ENCODE measurements at regions of chr14 and their contacts with region 1.

Region 1: GRCh38 chr14:88667555-88668273 is 104.9 kb downstream of the ZC3H14 start:
- DNase-seq: peak; percentile 49
- H3K4me3 ChIP-seq: no peak overlapping the region
- H3K27ac ChIP-seq: no peak overlapping the region
- H3K4me1 ChIP-seq: peaks cover 0 to 5% (median 2%) of the 10 kb centered on the region in 4 donors
- H3K27me3 ChIP-seq: no peaks in the 10 kb centered on the region
- CTCF ChIP-seq: peak; percentile 65 to 84 (median 79)
- EP300 ChIP-seq: no peak
- POLR2A ChIP-seq: no peak

Region 2: GRCh38 chr14:88411039-88411438 is 256.7 kb before region 1 on chr14:
- in situ Hi-C with region 1: no loop called
- intact Hi-C with region 1: no loop called
- DNase-seq: no peak
- H3K4me3 ChIP-seq: no peak overlapping the region
- H3K27ac ChIP-seq: no peak overlapping the region
- H3K4me1 ChIP-seq: no peaks in the 10 kb centered on the region
- H3K27me3 ChIP-seq: no peaks in the 10 kb centered on the region
- CTCF ChIP-seq: no peak
- EP300 ChIP-seq: no peak
- POLR2A ChIP-seq: no peak

Region 3: GRCh38 chr14:88863167-88863684 is 195.5 kb after region 1 on chr14:
- in situ Hi-C with region 1: loop called (anchors 25 kb)
- intact Hi-C with region 1: loop called (anchors 5 kb)
- DNase-seq: no peak
- H3K4me3 ChIP-seq: no peak overlapping the region
- H3K27ac ChIP-seq: no peak overlapping the region
- H3K4me1 ChIP-seq: no peaks in the 10 kb centered on the region
- H3K27me3 ChIP-seq: no peaks in the 10 kb centered on the region
- CTCF ChIP-seq: no peak
- EP300 ChIP-seq: no peak
- POLR2A ChIP-seq: no peak

Region 4: DNA sequence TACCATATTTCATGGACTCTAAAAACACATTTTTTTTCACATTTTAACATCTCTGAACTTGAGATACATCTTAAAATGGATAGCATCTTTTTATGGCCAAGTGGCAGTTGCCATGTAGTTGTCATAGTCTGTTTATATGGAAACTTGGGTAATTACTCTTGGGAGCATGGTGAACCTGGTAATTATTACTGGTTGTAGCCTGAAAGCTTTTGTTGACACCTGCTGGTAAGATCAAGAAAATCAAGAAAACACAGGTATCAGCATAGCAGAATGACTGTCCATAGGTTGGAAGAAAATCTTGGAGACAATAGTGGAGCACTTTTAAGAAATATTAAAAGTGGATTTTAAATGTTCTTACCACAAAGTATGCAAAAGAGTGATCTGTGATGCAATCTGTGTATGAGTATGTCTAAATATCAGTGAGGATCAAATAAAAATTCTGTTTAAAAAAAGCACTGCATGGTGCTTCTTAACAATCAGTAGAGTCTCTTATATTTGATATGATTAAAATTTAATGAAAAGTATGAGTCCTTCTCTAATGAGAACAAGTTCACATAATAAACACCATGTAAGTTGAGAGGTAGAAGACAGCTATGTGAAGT is 200.9 kb after region 1 on chr14:
- in situ Hi-C with region 1: loop called (anchors 25 kb)
- intact Hi-C with region 1: loop called (anchors 5 kb)
- DNase-seq: no peak
- H3K4me3 ChIP-seq: no peak overlapping the region
- H3K27ac ChIP-seq: no peak overlapping the region
- H3K4me1 ChIP-seq: no peaks in the 10 kb centered on the region
- H3K27me3 ChIP-seq: no peaks in the 10 kb centered on the region
- CTCF ChIP-seq: peak; percentile 26 to 41 (median 36)
- EP300 ChIP-seq: no peak
- POLR2A ChIP-seq: no peak

Region 5: GRCh38 chr14:89000007-89000942 is 332.6 kb after region 1 on chr14:
- in situ Hi-C with region 1: loop called in 1 of 4 experiments (anchors 25 kb)
- intact Hi-C with region 1: no loop called
- DNase-seq: peak; percentile 68
- H3K4me3 ChIP-seq: no peak overlapping the region
- H3K27ac ChIP-seq: no peak overlapping the region
- H3K4me1 ChIP-seq: peaks cover 0 to 4% (median 0%) of the 10 kb centered on the region in 4 donors
- H3K27me3 ChIP-seq: no peaks in the 10 kb centered on the region
- CTCF ChIP-seq: no peak
- EP300 ChIP-seq: no peak
- POLR2A ChIP-seq: no peak

Region 6: DNA sequence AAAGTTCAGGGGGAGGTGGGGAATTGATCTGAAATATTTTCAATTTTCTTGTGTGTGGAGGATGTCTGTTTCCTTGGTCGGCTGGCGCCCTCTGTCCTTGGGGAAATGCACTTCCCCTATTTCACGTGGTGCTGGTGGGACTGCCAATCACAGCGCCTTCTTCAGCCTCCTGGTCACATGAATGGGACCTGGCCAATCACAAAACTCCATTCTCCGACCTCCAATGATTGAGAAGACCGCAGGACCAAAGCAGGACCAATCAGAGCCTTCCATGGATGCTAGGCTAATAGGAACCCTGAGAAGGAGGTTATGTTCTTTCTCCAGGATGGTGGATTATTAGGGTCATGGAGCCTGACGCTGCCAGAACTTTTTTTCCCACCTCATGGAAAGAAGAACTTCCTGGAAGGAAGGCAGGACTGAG is 345.4 kb after region 1 on chr14:
- in situ Hi-C with region 1: loop called in 2 of 4 experiments (anchors 10 to 25 kb)
- intact Hi-C with region 1: no loop called
- DNase-seq: peak; percentile 79
- H3K4me3 ChIP-seq: peak overlapping the region in 3 of 4 donors; percentile 9 to 46 (median 27)
- H3K27ac ChIP-seq: peak overlapping the region; percentile 73 to 82 (median 77)
- H3K4me1 ChIP-seq: peaks cover 0 to 4% (median 0%) of the 10 kb centered on the region in 4 donors
- H3K27me3 ChIP-seq: no peaks in the 10 kb centered on the region
- CTCF ChIP-seq: peak; percentile 25 to 70 (median 50)
- EP300 ChIP-seq: no peak
- POLR2A ChIP-seq: no peak

Measured in transverse colon (tissue), 4 donors.